CD8-positive, alpha-beta T cell (primary cell): ENCODE measurements at regions of chr1 and their contacts with region 1.

Region 1: GRCh38 chr1:89298461-89298860 is 25.8 kb upstream of the GBP5 start:
- DNase-seq: no peak
- ATAC-seq: no peak
- H3K4me3 ChIP-seq: no peak overlapping the region
- H3K4me3 Mint-ChIP-seq: no peak overlapping the region
- H3K27ac ChIP-seq: no peak overlapping the region
- H3K27ac Mint-ChIP-seq: no peak overlapping the region
- H3K4me1 ChIP-seq: peaks cover 20% of the 10 kb centered on the region
- H3K4me1 Mint-ChIP-seq: peaks cover 36% of the 10 kb centered on the region
- H3K27me3 ChIP-seq: no peaks in the 10 kb centered on the region
- H3K27me3 Mint-ChIP-seq: no peaks in the 10 kb centered on the region
- CTCF ChIP-seq: no peak

Region 2: DNA sequence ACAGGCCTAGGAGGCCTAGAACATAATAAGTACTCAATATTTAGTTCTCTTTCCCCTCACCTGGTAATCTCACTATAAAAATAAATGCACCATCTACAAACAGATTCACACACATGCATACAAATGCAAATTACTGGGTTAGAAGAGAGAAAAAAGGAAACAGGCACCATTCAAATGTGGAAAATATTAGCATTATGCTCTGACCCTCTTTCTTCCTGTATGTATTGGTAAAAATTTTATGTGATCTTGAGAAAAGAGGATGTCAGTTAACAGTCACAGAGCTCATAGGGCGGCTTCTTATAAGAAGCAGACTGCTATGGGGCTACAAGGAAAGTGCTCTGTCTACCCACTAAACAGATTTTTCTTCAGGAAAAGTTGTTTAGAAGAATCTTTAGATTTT is 1404.4 kb before region 1 on chr1:
- CTCF ChIA-PET with region 1: no interaction called
- POLR2A ChIA-PET with region 1: no interaction called
- intact Hi-C with region 1: no loop called
- DNase-seq: no peak
- ATAC-seq: no peak
- H3K4me3 ChIP-seq: no peak overlapping the region
- H3K4me3 Mint-ChIP-seq: no peak overlapping the region
- H3K27ac ChIP-seq: no peak overlapping the region
- H3K27ac Mint-ChIP-seq: no peak overlapping the region
- H3K4me1 ChIP-seq: no peaks in the 10 kb centered on the region
- H3K4me1 Mint-ChIP-seq: no peaks in the 10 kb centered on the region
- H3K27me3 ChIP-seq: no peaks in the 10 kb centered on the region
- H3K27me3 Mint-ChIP-seq: peaks cover 2% of the 10 kb centered on the region
- CTCF ChIP-seq: no peak

Region 3: DNA sequence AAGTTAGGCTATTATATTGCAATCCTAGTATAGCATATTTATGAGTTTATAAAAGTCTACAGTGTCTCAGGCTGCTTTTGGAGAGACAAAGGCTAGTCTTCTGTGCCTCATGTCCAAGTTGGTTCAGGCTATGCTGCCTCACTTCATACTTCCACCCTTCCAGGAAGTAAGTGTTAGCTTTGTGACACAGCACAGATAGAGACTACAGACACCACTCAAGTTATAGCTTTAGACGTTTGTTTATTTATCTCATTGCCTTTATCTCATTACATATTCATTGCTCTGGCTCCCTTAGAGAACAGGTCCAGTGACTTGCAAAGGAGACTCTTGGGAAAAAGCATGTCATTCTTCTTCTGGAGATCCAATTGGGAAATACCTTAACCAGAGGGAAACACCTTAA is 77.1 kb before region 1 on chr1:
- CTCF ChIA-PET with region 1: no interaction called
- POLR2A ChIA-PET with region 1: no interaction called
- intact Hi-C with region 1: no loop called
- DNase-seq: no peak
- ATAC-seq: no peak
- H3K4me3 ChIP-seq: no peak overlapping the region
- H3K4me3 Mint-ChIP-seq: no peak overlapping the region
- H3K27ac ChIP-seq: no peak overlapping the region
- H3K27ac Mint-ChIP-seq: no peak overlapping the region
- H3K4me1 ChIP-seq: no peaks in the 10 kb centered on the region
- H3K4me1 Mint-ChIP-seq: no peaks in the 10 kb centered on the region
- H3K27me3 ChIP-seq: no peaks in the 10 kb centered on the region
- H3K27me3 Mint-ChIP-seq: no peaks in the 10 kb centered on the region
- CTCF ChIP-seq: no peak

Region 4: DNA sequence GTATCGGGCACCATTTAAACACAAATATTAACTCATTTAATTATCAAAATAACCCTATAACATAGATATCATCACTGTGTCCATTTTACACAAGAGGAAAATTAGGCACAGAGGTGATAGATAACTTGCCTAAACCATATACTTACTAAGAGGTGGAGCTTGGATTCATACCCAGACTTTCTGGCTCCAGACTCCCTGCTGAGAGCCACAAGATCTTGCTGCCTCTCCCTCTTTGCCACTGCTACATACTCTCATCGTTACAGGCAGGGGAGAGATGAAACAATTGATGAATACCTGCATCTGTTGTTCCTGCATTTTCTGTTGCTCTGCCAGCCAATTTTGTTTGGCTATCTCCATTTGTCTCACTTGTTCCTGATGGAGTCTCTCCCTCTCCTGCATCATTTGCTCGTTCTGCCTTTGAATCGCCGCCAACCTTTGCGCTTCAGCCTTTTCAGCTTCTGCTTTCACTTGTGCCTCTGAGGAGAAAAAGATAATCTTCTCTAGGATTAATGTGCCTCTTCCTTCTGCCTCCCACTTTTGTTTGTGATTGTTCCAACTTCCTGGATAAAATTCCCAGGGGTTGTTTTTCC is 36.4 kb before region 1 on chr1:
- CTCF ChIA-PET with region 1: no interaction called
- POLR2A ChIA-PET with region 1: interaction called, 3 read pairs
- intact Hi-C with region 1: loop called in 1 of 2 experiments (anchors 5 kb)
- DNase-seq: no peak
- ATAC-seq: no peak
- H3K4me3 ChIP-seq: no peak overlapping the region
- H3K4me3 Mint-ChIP-seq: peak overlapping the region; percentile 32
- H3K27ac ChIP-seq: peak overlapping the region in 1 of 2 experiments; percentile 55
- H3K27ac Mint-ChIP-seq: peak overlapping the region; percentile 78
- H3K4me1 ChIP-seq: peaks cover 58% of the 10 kb centered on the region
- H3K4me1 Mint-ChIP-seq: peaks cover 82% of the 10 kb centered on the region
- H3K27me3 ChIP-seq: no peaks in the 10 kb centered on the region
- H3K27me3 Mint-ChIP-seq: no peaks in the 10 kb centered on the region
- CTCF ChIP-seq: no peak

Region 5: GRCh38 chr1:89286549-89287180 is 11.8 kb before region 1 on chr1:
- CTCF ChIA-PET with region 1: no interaction called
- POLR2A ChIA-PET with region 1: interaction called, 11 read pairs
- intact Hi-C with region 1: no loop called
- DNase-seq: peak in 2 of 9 experiments; percentile 33 to 63
- ATAC-seq: peak; percentile 70
- H3K4me3 ChIP-seq: peak overlapping the region; percentile 25 to 30
- H3K4me3 Mint-ChIP-seq: peak overlapping the region; percentile 74
- H3K27ac ChIP-seq: peak overlapping the region; percentile 26 to 75
- H3K27ac Mint-ChIP-seq: peak overlapping the region; percentile 90
- H3K4me1 ChIP-seq: peaks cover 48% of the 10 kb centered on the region
- H3K4me1 Mint-ChIP-seq: peaks cover 61% of the 10 kb centered on the region
- H3K27me3 ChIP-seq: no peaks in the 10 kb centered on the region
- H3K27me3 Mint-ChIP-seq: no peaks in the 10 kb centered on the region
- CTCF ChIP-seq: no peak

Region 6: GRCh38 chr1:89310505-89310904 is 12.0 kb after region 1 on chr1:
- CTCF ChIA-PET with region 1: interaction called, 4 read pairs
- POLR2A ChIA-PET with region 1: interaction called, 6 read pairs
- intact Hi-C with region 1: loop called in 1 of 2 experiments (anchors 2 kb)
- DNase-seq: peak in 2 of 9 experiments; percentile 27 to 57
- ATAC-seq: peak; percentile 54
- H3K4me3 ChIP-seq: no peak overlapping the region
- H3K4me3 Mint-ChIP-seq: peak overlapping the region; percentile 47
- H3K27ac ChIP-seq: peak overlapping the region; percentile 22 to 64
- H3K27ac Mint-ChIP-seq: peak overlapping the region; percentile 90
- H3K4me1 ChIP-seq: peaks cover 39% of the 10 kb centered on the region
- H3K4me1 Mint-ChIP-seq: peaks cover 54% of the 10 kb centered on the region
- H3K27me3 ChIP-seq: no peaks in the 10 kb centered on the region
- H3K27me3 Mint-ChIP-seq: no peaks in the 10 kb centered on the region
- CTCF ChIP-seq: no peak